Right ventricle myocardium superior (tissue), 1 donor: ENCODE measurements at regions of chr12 and their contacts with region 1.

Region 1: GRCh38 chr12:112382232-112382796 is at the start of gene HECTD4:
- DNase-seq: peak; percentile 99
- ATAC-seq: peak; percentile 99
- total RNA-seq, gene HECTD4: 20.0 TPM

Region 2: GRCh38 chr12:111942557-111942956 is 439.8 kb before region 1 on chr12:
- intact Hi-C with region 1: loop called (anchors 10 kb)
- DNase-seq: no peak
- ATAC-seq: no peak

Region 3: DNA sequence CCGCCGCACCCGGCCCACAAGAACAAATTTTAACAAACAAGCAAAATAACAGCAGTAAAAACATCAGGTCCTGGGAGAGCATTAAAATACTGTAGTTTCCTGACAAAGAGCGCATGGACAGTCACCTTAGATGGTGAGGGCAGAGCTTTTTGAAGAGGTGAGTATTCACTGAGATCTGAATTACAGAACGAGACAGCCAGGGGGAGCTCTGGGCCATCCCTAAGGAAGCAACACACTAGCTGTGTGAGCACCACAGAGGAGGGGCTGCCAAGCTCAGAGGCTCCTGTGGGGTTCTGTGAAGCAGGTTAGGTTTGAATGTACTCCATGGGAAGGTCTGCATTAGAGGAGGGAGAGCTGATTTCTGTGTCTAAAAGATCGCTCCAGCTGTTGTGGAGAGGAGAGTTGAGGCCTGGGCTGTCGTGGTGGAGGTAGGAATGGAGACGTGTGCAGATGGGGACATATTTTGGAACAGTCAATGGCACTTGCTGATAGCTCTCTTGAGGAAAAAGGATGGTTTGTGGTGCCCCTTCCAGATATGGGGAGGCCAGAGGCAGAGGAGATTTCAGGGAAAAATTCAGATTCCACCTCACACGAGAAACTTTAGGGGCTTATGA is 184.1 kb before region 1 on chr12:
- intact Hi-C with region 1: loop called (anchors 5 kb)
- DNase-seq: no peak
- ATAC-seq: peak; percentile 83

Region 4: GRCh38 chr12:112283546-112283945 is 98.8 kb before region 1 on chr12:
- intact Hi-C with region 1: loop called (anchors 10 kb)
- DNase-seq: no peak
- ATAC-seq: peak; percentile 89